A549 (cell line): ENCODE measurements at regions of chr17 and their contacts with region 1.

Region 1: DNA sequence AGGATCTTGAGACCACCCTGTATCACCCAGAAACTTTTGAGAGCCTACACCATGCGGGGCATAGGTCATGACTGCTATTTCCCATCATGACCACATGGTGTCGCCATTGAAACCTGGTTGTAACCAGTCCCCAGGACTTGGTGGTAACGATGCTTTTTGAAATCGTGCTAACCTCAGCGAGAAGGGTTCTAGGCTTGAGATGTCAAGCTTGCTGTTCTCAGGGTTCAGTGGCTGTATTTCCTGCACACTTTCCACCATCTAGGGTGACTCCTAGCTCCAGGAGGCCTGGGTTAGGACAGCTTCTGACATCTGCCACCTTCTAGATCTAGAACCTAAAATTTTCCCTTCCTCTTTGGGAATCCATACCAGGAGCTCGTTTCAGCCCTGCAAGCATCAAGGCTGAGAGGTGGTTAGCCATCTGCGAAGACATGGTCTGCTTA is 13.0 kb upstream of the SPNS3 start:
- DNase-seq: peak; percentile 85 to 90
- ATAC-seq: peak; percentile 93 to 95
- H3K4me3 ChIP-seq: no peak overlapping the region
- H3K27ac ChIP-seq: no peak overlapping the region
- H3K4me1 ChIP-seq: no peaks in the 10 kb centered on the region
- CTCF ChIP-seq: peak; percentile 90
- EP300 ChIP-seq: no peak
- POLR2A ChIP-seq: no peak
- RAD21 ChIP-seq: peak; percentile 85 to 93

Region 2: DNA sequence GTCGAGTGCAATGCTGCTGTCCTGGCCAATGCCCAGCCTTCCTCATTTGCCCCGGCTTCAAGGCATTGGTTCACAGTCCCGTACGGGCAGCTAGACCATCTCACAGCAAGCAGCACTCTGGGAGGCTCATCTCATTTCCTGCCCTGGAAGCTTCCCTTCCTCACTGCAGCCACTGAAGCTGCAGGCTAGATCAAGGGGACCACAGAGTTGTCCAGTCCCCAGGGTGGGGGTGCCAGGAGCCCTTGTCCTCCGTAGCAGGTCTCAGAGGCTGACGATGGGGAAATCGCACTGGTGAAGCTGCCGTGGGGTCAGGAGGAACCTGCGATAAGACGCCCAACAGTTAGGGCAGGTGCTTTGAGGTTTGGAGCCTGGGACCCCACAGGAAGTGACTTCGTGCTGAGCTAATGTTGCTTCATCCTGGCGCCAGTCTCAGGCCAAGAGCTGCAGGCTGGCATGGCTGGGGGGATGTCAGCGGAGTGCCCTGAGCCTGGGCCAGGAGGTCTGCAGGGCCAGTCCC is 12.9 kb after region 1 on chr17 and contains the start of gene SPNS3:
- CTCF ChIA-PET with region 1: interaction called, 126 read pairs
- POLR2A ChIA-PET with region 1: no interaction called
- DNase-seq: no peak
- ATAC-seq: peak in 1 of 2 experiments; percentile 44; a peak in 4 of 6 replicates
- H3K4me3 ChIP-seq: no peak within 1 kb of the TSS
- H3K27ac ChIP-seq: no peak within 1 kb of the TSS
- H3K4me1 ChIP-seq: no peaks in the 10 kb centered on the region
- CTCF ChIP-seq: no peak
- EP300 ChIP-seq: no peak
- POLR2A ChIP-seq: no peak
- RAD21 ChIP-seq: no peak
- polyA plus RNA-seq, gene SPNS3: not detected in 2 replicates

Region 3: GRCh38 chr17:4480929-4481898 is 60.5 kb after region 1 on chr17:
- CTCF ChIA-PET with region 1: interaction called, 12 read pairs
- POLR2A ChIA-PET with region 1: no interaction called
- DNase-seq: no peak
- ATAC-seq: peak in 1 of 2 experiments; percentile 7; a peak in 3 of 6 replicates
- H3K4me3 ChIP-seq: no peak overlapping the region
- H3K27ac ChIP-seq: 0 out of 6 replicates have a peak overlapping the region, but pooled peaks of 1 of the 2 experiments have one; percentile 22
- H3K4me1 ChIP-seq: peaks cover 22% of the 10 kb centered on the region; the same call in 2 of the 3 replicates
- CTCF ChIP-seq: no peak
- EP300 ChIP-seq: no peak
- POLR2A ChIP-seq: no peak
- RAD21 ChIP-seq: no peak

Region 4: DNA sequence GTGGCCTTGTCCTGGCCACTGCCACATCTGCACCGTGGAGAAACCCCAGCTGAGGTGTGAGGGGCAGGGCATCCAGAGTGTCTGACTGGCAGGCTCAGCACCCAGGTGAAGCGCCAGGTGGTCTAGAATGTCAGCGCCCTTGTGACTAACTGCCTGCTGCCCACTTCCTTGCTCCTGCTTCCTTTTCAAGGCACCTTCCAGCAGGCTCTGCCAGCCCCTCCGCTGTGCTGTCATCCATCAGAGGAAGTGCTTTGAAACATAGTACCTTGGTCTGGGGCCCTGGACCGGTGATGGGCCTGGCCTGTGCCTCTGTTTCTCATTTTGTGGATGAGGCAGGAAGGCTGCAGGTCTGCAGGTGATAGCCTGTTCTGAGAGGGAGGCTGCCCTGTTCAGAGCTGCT is 83.5 kb after region 1 on chr17:
- CTCF ChIA-PET with region 1: interaction called, 17 read pairs
- POLR2A ChIA-PET with region 1: no interaction called
- DNase-seq: no peak
- ATAC-seq: no peak
- H3K4me3 ChIP-seq: no peak overlapping the region
- H3K27ac ChIP-seq: no peak overlapping the region
- H3K4me1 ChIP-seq: peaks cover 7% of the 10 kb centered on the region; the same call in 2 of the 3 replicates
- CTCF ChIP-seq: no peak
- EP300 ChIP-seq: no peak
- POLR2A ChIP-seq: no peak
- RAD21 ChIP-seq: no peak

Region 5: DNA sequence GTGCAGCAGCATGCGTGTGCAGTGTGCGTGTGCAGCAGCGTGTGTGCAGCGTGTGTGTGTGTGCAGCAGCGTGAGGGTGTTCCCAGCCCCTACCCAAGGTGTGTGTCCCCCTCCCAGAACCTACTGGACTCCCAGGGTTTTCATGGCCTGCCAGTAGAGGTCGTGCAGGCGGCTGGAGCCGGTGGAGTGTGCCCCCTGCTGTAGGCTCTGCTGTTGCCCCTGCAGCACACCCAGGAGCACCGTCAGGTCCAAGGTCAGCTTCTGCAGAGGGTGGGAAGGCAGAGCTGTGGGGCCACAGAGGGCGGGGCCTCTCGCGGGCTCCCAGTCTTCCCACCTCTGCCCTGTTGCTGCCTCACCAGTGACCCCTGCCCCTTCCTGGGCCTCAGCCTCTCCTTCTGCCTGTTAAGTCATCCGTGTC is 119.5 kb after region 1 on chr17:
- CTCF ChIA-PET with region 1: interaction called, 25 read pairs
- POLR2A ChIA-PET with region 1: no interaction called
- DNase-seq: no peak
- ATAC-seq: peak in 1 of 2 experiments; percentile 24; a peak in 3 of 6 replicates
- H3K4me3 ChIP-seq: no peak overlapping the region
- H3K27ac ChIP-seq: no peak overlapping the region
- H3K4me1 ChIP-seq: peaks cover 1% of the 10 kb centered on the region; the same call in 2 of the 3 replicates
- CTCF ChIP-seq: peak; percentile 36
- EP300 ChIP-seq: no peak
- POLR2A ChIP-seq: no peak
- RAD21 ChIP-seq: 0 out of 5 replicates have a peak, but pooled peaks of 1 of the 2 experiments have one; percentile 20

Region 6: GRCh38 chr17:4920351-4921048 is 499.8 kb after region 1 on chr17:
- CTCF ChIA-PET with region 1: no interaction called
- POLR2A ChIA-PET with region 1: interaction called, 10 read pairs
- DNase-seq: no peak
- ATAC-seq: peak; percentile 40 to 54; a peak in 4 of 6 replicates
- H3K4me3 ChIP-seq: no peak overlapping the region
- H3K27ac ChIP-seq: no peak overlapping the region
- H3K4me1 ChIP-seq: 0 out of 3 replicates have a peak, but pooled peaks cover 4% of the 10 kb centered on the region
- CTCF ChIP-seq: no peak
- EP300 ChIP-seq: no peak
- POLR2A ChIP-seq: no peak
- RAD21 ChIP-seq: no peak